Posterior vena cava (tissue), 2 donors: ENCODE measurements at regions of chr6 and their contacts with region 1.

Region 1: DNA sequence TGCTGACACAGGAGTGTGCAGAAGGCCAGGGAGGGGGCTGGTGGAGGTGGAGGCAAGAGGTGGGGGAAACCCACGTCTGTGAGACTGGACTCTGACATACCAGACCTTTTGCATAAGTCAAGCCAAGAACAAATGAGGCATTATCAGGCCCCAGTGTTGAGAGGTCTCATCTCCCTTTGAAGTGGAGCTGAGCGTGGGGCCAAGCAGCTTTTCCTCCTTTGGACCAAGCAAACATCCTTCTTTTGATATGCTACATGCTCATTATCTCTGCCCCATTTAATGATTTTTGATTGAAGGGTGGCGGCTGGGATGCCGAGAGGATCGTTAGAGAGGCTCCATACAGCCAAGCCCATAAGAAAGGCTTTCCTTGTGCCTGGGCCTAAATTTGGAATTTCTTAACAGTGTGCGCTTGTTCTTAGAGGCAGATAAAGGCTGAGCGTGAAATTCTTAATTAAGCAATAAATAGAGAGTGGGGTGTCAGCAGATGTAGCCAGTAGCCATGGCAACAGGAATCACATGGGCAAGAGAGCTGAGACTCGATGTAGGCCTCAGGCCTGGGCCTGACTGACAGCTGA is 244.5 kb downstream of the PKHD1 start:
- DNase-seq: no peak

Region 2: DNA sequence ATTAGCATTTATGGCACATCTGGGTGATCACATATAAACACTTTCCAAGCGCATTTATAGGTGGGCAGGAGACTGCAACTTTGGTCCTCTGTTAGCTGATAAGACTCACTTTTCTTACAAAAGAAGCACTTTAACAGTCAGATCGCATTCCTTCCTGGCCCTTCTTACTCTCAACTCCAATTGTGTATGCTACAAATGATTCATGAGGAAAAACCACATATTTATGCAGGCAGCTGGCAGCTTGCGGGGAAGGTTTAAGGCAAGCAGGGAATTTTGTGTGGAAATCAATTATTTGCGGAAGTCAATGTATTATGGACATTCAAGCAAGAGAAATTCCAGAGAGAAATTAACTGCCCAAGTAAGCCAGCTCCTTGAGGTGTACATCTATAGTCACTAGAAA is 50.5 kb after region 1 on chr6:
- intact Hi-C with region 1: loop called in 1 of 2 experiments (anchors 2 kb)
- DNase-seq: no peak